A549 (cell line): ENCODE measurements at regions of chr12 and their contacts with region 1.

Region 1: GRCh38 chr12:109597795-109598427 is 24.3 kb downstream of the MVK start:
- DNase-seq: peak; percentile 83 to 95
- ATAC-seq: peak; percentile 92 to 97
- H3K4me3 ChIP-seq: no peak overlapping the region
- H3K27ac ChIP-seq: peak overlapping the region in 1 of 2 experiments; percentile 62; a peak in 2 of 6 replicates
- H3K4me1 ChIP-seq: peaks cover 4% of the 10 kb centered on the region
- CTCF ChIP-seq: peak; percentile 88
- EP300 ChIP-seq: no peak
- POLR2A ChIP-seq: no peak
- RAD21 ChIP-seq: peak; percentile 88 to 89

Region 2: GRCh38 chr12:109518820-109519665 is 78.9 kb before region 1 on chr12:
- CTCF ChIA-PET with region 1: interaction called, 20 read pairs
- POLR2A ChIA-PET with region 1: no interaction called
- DNase-seq: peak; percentile 48 to 80
- ATAC-seq: peak; percentile 64 to 91; a peak in 4 of 6 replicates
- H3K4me3 ChIP-seq: no peak overlapping the region
- H3K27ac ChIP-seq: no peak overlapping the region
- H3K4me1 ChIP-seq: no peaks in the 10 kb centered on the region
- CTCF ChIP-seq: peak; percentile 86
- EP300 ChIP-seq: no peak
- POLR2A ChIP-seq: no peak
- RAD21 ChIP-seq: peak; percentile 74 to 82

Region 3: GRCh38 chr12:109612975-109613502 is 15.1 kb after region 1 on chr12:
- CTCF ChIA-PET with region 1: interaction called, 54 read pairs
- POLR2A ChIA-PET with region 1: no interaction called
- DNase-seq: peak; percentile 30 to 55
- ATAC-seq: peak; percentile 58 to 80
- H3K4me3 ChIP-seq: no peak overlapping the region
- H3K27ac ChIP-seq: no peak overlapping the region
- H3K4me1 ChIP-seq: no peaks in the 10 kb centered on the region
- CTCF ChIP-seq: peak; percentile 27; the same call in 2 of the 3 replicates
- EP300 ChIP-seq: no peak
- POLR2A ChIP-seq: no peak
- RAD21 ChIP-seq: peak in 1 of 2 experiments; percentile 27; a peak in 1 of 5 replicates

Region 4: GRCh38 chr12:109645194-109645593 is 47.3 kb after region 1 on chr12:
- CTCF ChIA-PET with region 1: interaction called, 12 read pairs
- POLR2A ChIA-PET with region 1: no interaction called
- DNase-seq: no peak
- ATAC-seq: no peak
- H3K4me3 ChIP-seq: no peak overlapping the region
- H3K27ac ChIP-seq: no peak overlapping the region
- H3K4me1 ChIP-seq: peaks cover 9% of the 10 kb centered on the region; the same call in 1 of the 3 replicates
- CTCF ChIP-seq: no peak
- EP300 ChIP-seq: no peak
- POLR2A ChIP-seq: no peak
- RAD21 ChIP-seq: no peak

Region 5: DNA sequence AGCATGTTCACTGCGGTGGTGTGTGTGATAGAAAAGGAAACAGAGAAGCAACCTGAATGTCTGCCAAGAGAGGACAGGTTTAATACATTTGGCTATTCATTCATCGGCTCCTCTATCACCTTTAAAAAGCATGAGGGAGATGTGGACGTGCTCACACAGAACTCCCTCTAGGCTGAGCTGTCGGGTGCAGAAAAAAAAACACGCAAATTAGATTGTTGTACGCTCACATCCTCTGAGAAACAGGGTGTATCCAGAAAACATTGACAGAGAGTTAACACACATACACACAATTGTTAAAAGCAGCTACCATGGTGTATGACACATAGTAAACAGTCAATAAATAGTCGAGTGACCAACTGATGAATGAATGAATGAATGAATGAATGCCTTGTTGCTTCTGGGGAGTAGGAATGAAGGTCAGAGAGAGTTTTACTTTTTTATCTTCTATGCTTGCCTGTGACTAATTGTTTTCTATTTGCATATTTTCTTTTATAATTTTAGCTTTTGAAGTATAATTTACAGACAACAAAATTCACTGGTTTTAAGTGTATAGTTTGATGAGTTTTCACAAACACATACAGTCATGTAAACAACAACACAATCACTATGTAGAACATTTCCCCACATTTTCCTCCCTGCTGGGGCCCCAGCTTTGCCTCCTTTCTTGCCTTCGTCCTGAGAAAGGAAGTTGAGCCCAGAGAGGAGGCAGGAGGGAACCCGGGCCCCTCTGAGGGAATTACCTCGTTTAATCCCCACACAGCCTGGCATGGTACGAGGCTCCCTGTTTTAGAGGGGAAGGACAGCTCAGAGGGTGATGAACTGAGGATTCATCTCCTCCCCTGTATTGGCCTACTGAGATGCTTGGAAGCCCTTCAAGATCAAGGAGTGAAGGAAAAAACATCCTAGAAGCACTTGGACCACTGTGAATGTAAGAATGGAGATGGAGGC is 96.0 kb after region 1 on chr12:
- CTCF ChIA-PET with region 1: interaction called, 14 read pairs
- POLR2A ChIA-PET with region 1: no interaction called
- DNase-seq: no peak
- ATAC-seq: no peak
- H3K4me3 ChIP-seq: no peak overlapping the region
- H3K27ac ChIP-seq: no peak overlapping the region
- H3K4me1 ChIP-seq: peaks cover 5% of the 10 kb centered on the region; the same call in 1 of the 3 replicates
- CTCF ChIP-seq: no peak
- EP300 ChIP-seq: no peak
- POLR2A ChIP-seq: no peak
- RAD21 ChIP-seq: no peak

Region 6: DNA sequence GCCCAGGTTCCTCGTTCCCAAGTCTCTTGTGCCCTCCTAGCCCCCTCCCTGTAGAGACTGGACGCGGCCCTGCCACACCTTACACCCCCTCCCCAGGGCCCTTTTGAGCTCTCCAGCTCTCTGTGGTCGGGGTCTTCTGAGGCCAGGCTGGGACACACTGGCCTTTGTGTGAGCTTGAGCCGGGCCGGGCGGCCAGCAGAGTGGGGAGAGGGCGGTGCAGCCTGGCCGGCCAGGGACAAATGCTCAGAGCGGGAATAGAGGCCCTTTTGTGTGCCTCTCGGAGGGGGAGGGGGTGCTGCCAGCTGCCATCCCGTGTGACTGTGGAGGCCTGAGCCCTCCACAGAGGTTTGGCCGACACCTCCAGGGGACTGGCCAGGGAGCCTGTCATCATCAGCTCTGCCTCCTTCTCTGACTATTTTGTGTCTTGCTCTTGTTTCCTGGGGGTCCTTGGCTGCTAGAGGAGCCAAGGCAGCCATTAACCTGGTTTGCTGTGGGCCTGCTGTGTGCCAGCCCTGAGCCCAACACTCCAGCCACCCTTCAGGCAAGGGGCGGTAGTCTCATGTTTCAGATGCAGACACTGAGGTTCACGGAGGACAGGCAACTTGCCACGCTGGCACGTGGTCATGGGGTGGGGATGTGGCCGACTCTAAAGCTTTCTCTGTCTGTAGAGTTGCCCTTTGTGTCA is 129.3 kb after region 1 on chr12:
- CTCF ChIA-PET with region 1: interaction called, 11 read pairs
- POLR2A ChIA-PET with region 1: no interaction called
- DNase-seq: no peak
- ATAC-seq: no peak
- H3K4me3 ChIP-seq: no peak overlapping the region
- H3K27ac ChIP-seq: no peak overlapping the region
- H3K4me1 ChIP-seq: no peaks in the 10 kb centered on the region
- CTCF ChIP-seq: no peak
- EP300 ChIP-seq: no peak
- POLR2A ChIP-seq: no peak
- RAD21 ChIP-seq: no peak

Region 7: GRCh38 chr12:109804820-109805761 is 207.2 kb after region 1 on chr12:
- CTCF ChIA-PET with region 1: interaction called, 17 read pairs
- POLR2A ChIA-PET with region 1: no interaction called
- DNase-seq: peak; percentile 62 to 82
- ATAC-seq: peak; percentile 77 to 93
- H3K4me3 ChIP-seq: no peak overlapping the region
- H3K27ac ChIP-seq: no peak overlapping the region
- H3K4me1 ChIP-seq: no peaks in the 10 kb centered on the region
- CTCF ChIP-seq: peak; percentile 94
- EP300 ChIP-seq: no peak
- POLR2A ChIP-seq: no peak
- RAD21 ChIP-seq: peak; percentile 91 to 94